ENCODE measurements at regions of chr1 and their contacts with region 1.

Region 1: DNA sequence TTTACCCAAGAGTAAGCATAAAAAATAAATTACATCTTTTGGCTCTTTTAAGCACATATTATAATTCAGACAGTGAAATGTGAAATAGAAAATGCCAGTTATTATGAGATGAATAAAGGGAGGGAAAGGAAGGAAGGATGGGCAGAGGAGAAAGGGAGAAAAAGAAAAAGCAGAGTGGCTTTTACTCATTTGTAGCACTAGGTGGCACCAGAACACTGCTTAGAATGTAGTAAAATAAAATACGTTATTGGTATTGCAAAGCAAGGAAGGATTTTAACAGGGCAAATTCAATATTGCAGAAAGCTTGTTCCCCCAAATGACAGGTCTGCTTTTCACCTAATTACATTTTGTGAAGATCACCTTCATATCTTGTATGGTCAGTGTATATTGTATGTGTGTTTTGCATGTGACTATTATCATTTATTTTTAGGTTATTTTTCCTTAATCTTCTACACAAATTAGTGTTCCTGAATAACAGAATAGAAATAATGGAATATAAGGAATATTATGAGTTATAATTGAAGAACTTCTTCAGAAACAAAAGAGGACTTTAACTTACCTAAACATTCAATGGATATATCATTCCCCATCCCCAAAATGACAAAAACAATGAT is 9.1 kb upstream of the PCNX2 start:
- DNase-seq: no peak
- H3K4me3 ChIP-seq: no peak overlapping the region
- H3K27ac ChIP-seq: no peak overlapping the region
- H3K4me1 ChIP-seq: no peaks in the 10 kb centered on the region
- H3K27me3 ChIP-seq: no peaks in the 10 kb centered on the region
- CTCF ChIP-seq: peak in 2 of 3 donors; percentile 39 to 52
- EP300 ChIP-seq: no peak
- POLR2A ChIP-seq: no peak

Region 2: DNA sequence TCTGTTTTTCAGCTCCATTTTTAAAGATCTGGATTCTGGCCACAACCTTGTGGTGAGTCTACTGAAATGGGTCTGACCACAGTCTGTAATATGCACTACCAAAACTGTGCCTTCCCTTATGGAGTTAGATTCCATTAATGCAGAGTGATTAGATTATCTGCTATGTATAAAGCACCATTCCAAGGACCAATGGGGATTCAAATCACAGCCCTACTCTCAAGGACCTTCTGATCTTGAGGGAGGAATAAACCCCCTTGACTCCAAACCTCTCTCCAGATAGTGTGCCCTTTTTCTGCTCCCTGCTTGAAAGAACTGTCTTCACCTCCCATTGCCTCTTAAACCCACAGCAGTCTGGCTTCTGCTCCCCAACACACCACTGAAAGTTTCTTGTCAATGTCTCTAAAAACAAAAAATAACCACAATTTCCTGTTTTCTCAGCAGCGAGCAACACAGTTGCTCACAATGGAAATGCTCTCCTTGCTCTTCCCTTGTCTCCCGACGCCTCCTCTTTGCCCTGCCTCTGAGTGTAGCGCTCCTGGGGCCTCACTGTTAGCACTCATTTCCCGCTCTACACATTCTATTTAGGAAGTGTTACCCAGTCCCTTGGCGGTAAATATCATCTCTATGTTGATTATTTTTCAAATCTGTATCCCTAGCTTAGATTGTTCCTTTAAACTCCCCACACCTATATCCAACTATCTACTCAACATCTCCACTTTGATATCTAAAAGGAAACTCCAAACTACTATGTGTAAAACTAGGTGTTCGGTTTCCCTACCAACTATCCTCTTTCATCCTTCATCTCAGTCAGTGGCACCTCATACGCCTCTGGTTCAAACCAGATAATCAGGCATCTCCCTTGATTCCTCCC is 22.6 kb before region 1 on chr1:
- intact Hi-C with region 1: no loop called
- DNase-seq: no peak
- H3K4me3 ChIP-seq: no peak overlapping the region
- H3K27ac ChIP-seq: no peak overlapping the region
- H3K4me1 ChIP-seq: no peaks in the 10 kb centered on the region
- H3K27me3 ChIP-seq: peaks cover 3% of the 10 kb centered on the region
- CTCF ChIP-seq: no peak
- EP300 ChIP-seq: no peak
- POLR2A ChIP-seq: no peak

Region 3: GRCh38 chr1:233443040-233443439 is 138.4 kb after region 1 on chr1:
- intact Hi-C with region 1: no loop called
- DNase-seq: no peak
- H3K4me3 ChIP-seq: no peak overlapping the region
- H3K27ac ChIP-seq: no peak overlapping the region
- H3K4me1 ChIP-seq: no peaks in the 10 kb centered on the region
- H3K27me3 ChIP-seq: no peaks in the 10 kb centered on the region
- CTCF ChIP-seq: no peak
- EP300 ChIP-seq: no peak
- POLR2A ChIP-seq: no peak

Region 4: GRCh38 chr1:233790662-233791375 is 486.2 kb after region 1 on chr1:
- intact Hi-C with region 1: loop called in 1 of 4 experiments (anchors 10 kb)
- DNase-seq: peak in 3 of 5 donors; percentile 10 to 32 (median 12)
- H3K4me3 ChIP-seq: no peak overlapping the region
- H3K27ac ChIP-seq: no peak overlapping the region
- H3K4me1 ChIP-seq: no peaks in the 10 kb centered on the region
- H3K27me3 ChIP-seq: no peaks in the 10 kb centered on the region
- CTCF ChIP-seq: peak; percentile 28 to 81 (median 49)
- EP300 ChIP-seq: no peak
- POLR2A ChIP-seq: no peak